A673 (cell line): ENCODE measurements at regions of chr9 and their contacts with region 1.

Region 1: GRCh38 chr9:81312337-81312736 is 377.0 kb downstream of the TLE1 start:
- DNase-seq: no peak
- H3K4me3 ChIP-seq: no peak overlapping the region
- H3K27ac ChIP-seq: no peak overlapping the region
- H3K4me1 ChIP-seq: no peaks in the 10 kb centered on the region
- H3K27me3 ChIP-seq: no peaks in the 10 kb centered on the region
- CTCF ChIP-seq: no peak

Region 2: DNA sequence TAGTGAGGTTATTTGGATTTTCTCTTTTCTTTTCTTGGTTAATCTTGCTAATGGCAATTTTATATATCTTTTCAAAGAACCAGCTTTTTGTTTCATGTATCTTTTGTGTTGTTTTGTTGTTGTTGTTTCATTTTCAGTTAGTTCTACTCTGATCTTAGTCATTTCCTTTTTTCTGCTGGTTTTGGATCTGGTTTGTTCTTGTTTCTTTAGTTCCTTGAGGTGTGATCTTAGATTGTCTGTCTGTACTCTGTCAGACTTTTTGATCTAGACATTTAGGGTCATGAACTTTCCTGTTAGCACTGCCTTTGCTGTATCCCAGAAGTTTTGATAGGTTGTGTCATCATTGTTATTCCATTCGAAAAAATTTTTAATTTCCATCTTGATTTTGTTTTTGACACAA is 22.7 kb before region 1 on chr9:
- CTCF ChIA-PET with region 1: no interaction called
- POLR2A ChIA-PET with region 1: no interaction called
- intact Hi-C with region 1: loop called (anchors 2 kb)
- DNase-seq: no peak
- H3K4me3 ChIP-seq: no peak overlapping the region
- H3K27ac ChIP-seq: no peak overlapping the region
- H3K4me1 ChIP-seq: no peaks in the 10 kb centered on the region
- H3K27me3 ChIP-seq: no peaks in the 10 kb centered on the region
- CTCF ChIP-seq: no peak